ENCODE measurements at regions of chr12 and their contacts with region 1.

Region 1: DNA sequence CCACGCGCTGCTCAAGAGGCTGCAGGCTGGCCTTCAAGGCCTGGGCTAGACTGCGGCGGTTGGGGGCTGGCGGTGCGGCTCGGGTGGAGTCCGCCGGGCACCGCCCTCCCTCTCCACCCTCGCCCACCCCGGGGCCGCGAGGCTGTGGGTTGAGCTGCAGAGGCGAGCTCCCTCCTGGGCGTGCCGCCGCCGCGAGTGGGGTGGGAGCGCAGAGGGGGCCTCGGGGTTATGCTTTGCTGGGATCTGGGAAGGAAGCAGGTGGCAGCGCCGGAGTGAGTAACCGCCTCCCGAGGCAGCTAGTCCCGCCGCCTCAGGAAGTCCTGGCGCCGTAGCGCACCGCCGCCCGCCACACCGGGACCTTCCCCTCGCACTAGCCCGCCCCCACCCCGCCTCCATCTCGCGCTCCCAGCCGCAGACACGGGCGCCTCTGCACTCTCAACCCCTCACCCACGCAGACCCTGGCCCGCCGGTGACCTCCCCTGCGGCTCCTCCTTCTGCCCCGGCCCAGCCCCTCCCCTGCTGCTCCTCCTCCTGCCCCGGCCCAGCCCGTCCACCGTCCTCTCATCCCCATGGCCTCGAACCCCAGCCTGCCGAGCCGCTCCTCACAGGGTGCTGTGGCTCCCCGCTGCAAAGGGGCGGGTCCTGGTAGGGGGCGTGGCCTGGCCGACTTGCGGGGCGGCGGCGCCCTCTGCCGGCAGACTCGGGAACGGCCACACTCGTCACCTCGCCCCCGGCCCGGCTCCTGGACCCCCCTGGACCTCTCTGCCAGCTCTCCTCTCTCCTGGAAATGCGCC is 16.6 kb downstream of the TAMALIN start:
- DNase-seq: peak; percentile 95
- H3K4me3 Mint-ChIP-seq: peak overlapping the region; percentile 79
- H3K27ac Mint-ChIP-seq: peak overlapping the region; percentile 91
- H3K4me1 Mint-ChIP-seq: peaks cover 32% of the 10 kb centered on the region
- H3K27me3 Mint-ChIP-seq: no peaks in the 10 kb centered on the region

Region 2: DNA sequence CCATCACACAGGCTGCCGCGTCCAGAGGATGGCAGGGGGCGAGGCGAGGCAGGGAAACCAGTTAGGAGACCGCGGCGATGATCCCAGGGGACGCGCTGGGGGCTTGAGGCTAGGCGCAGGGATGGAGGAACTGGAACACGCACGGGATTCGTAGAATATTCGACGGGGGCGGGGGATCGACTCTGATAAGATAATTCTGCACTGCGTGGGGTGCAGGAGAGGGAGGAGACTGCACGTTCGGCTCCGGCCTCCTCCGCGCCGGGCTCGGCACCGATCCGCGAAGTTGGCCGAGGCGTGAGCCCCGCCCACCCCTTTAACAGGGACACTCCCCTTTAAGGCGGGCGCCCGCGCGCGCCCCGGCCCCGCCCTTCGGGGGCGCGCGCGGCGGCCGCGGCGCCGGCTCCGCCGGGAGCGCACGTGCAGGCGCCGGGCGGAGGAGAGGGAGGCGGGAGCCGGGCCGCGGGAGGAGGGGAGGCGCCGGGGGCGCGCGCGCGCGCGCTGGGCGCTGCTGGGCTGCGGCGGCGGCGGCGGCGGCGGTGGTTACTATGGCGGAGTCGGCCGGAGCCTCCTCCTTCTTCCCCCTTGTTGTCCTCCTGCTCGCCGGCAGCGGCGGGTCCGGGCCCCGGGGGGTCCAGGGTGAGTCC is 72.1 kb before region 1 on chr12 and contains the start of gene ACVR1B:
- CTCF ChIA-PET with region 1: interaction called, 10 read pairs
- POLR2A ChIA-PET with region 1: no interaction called
- intact Hi-C with region 1: loop called (anchors 1 kb)
- DNase-seq: peak; percentile 93
- H3K4me3 Mint-ChIP-seq: peak within 1 kb of the TSS; percentile 81
- H3K27ac Mint-ChIP-seq: peak within 1 kb of the TSS; percentile 47
- H3K4me1 Mint-ChIP-seq: peaks cover 40% of the 10 kb centered on the region
- H3K27me3 Mint-ChIP-seq: peaks cover 6% of the 10 kb centered on the region
- total RNA-seq, gene ACVR1B: 8.0 to 8.3 TPM

Region 3: GRCh38 chr12:51980051-51980808 is 43.1 kb before region 1 on chr12:
- CTCF ChIA-PET with region 1: interaction called, 23 read pairs
- POLR2A ChIA-PET with region 1: no interaction called
- intact Hi-C with region 1: no loop called
- DNase-seq: peak; percentile 79
- H3K4me3 Mint-ChIP-seq: no peak overlapping the region
- H3K27ac Mint-ChIP-seq: peak overlapping the region; percentile 57
- H3K4me1 Mint-ChIP-seq: peaks cover 34% of the 10 kb centered on the region
- H3K27me3 Mint-ChIP-seq: no peaks in the 10 kb centered on the region

Region 4: DNA sequence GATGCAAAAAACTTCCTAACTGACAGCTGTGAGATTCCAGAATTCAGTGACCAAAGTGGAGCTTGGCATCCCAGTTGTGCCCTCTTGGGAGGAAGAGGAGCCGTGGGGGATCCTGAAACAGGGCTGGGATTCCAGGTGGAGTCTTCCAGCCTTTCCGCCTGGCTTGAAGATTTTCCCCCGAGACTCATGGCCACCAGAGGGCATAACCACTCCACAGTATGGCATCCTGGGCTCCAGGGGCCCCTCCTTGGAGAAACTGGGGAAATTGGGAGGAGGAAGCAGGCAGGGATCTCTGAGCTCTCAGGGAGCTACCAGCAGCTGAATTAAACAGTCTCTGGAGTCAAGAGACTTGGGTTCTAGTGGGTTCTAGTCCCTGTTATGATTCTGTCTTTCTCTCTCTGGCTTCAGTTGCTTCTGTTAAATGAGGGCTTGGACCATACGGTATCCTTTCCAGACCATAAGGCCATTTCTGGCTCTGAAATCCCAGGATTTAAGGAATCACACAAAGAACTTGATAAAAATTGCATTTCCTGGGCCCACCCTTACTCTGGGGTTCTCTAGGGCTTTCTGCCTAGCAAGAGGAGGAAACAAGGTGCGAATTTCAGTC is 19.2 kb before region 1 on chr12:
- CTCF ChIA-PET with region 1: interaction called, 399 read pairs
- POLR2A ChIA-PET with region 1: interaction called, 28 read pairs
- intact Hi-C with region 1: loop called (anchors 1 kb)
- DNase-seq: peak; percentile 36
- H3K4me3 Mint-ChIP-seq: no peak overlapping the region
- H3K27ac Mint-ChIP-seq: no peak overlapping the region
- H3K4me1 Mint-ChIP-seq: peaks cover 17% of the 10 kb centered on the region
- H3K27me3 Mint-ChIP-seq: peaks cover 2% of the 10 kb centered on the region

Region 5: GRCh38 chr12:52050761-52051541 is 27.6 kb after region 1 on chr12 and contains the start of gene NR4A1:
- CTCF ChIA-PET with region 1: interaction called, 261 read pairs
- POLR2A ChIA-PET with region 1: interaction called, 13 read pairs
- intact Hi-C with region 1: loop called (anchors 1 kb)
- DNase-seq: peak; percentile 99
- H3K4me3 Mint-ChIP-seq: peak within 1 kb of the TSS; percentile 88
- H3K27ac Mint-ChIP-seq: peak within 1 kb of the TSS; percentile 91
- H3K4me1 Mint-ChIP-seq: peaks cover 27% of the 10 kb centered on the region
- H3K27me3 Mint-ChIP-seq: no peaks in the 10 kb centered on the region
- total RNA-seq, gene NR4A1: 64.2 to 68.2 TPM

Region 6: DNA sequence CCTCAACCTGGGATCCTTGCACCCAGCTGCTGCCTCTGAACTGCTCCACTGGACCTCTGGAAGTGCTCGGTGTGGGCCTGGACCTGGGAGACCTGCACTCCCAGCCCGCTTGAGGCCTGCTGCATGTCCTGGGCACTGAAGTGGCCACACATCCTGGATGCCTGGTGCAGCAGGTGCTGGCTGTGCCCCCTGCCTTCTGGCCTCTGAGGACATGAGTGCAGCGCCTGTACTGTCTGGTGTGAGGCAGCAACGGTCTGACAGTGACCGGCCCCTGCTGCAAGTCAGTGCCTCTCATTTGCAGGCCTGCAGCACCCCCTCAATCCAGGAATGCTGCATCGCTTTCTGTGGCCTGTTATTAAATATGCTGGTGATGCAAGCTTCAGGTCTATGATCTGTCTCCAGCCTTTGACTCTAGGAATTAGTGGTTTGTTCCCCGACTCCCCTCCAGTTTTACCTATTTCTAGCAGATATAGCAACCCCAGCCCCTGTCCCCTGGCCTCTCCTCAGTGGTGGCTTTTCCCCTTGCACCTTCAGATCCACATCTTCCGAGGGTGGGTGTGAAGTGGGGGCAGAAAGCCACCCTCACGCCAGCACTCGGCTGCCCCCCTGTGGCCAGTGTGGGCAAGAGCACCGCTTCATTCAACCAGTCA is 59.7 kb after region 1 on chr12:
- CTCF ChIA-PET with region 1: interaction called, 438 read pairs
- POLR2A ChIA-PET with region 1: interaction called, 3 read pairs
- intact Hi-C with region 1: loop called (anchors 1 kb)
- DNase-seq: peak; percentile 74
- H3K4me3 Mint-ChIP-seq: no peak overlapping the region
- H3K27ac Mint-ChIP-seq: no peak overlapping the region
- H3K4me1 Mint-ChIP-seq: peaks cover 4% of the 10 kb centered on the region
- H3K27me3 Mint-ChIP-seq: no peaks in the 10 kb centered on the region

Region 7: DNA sequence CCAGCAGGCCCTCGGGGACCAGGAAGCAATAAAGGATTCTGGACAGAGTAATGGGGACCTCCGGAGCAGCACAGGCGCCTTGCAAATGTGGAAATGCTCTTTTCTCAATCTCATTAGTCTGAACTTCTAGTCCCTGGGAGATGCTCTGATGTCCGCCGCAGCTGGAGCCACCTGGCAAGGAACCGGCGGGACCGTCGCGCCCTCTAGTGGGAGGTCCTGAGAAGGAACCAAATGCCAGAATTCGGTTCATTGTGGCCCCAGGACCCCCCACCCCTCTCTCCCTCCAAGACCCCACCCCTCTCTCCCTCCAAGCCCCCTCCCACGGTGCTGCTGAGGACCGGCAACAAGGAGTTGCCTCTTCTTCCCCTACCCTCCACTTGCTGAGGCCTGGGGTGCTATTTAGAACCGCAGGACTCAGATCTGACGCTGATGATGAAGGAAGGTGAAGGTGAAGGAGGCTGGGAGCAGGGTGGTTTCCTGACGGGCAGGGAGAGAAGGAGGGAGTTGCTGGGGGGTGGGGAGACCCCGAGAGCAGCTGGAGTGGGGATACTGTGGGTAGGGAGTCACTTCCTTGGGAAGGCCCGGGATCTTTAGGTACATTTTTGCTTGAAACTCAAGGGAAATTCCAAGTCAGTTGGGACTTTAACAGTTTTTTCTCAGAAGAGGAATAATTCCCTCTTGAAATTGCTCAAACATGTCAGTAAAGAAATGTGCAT is 98.6 kb after region 1 on chr12:
- CTCF ChIA-PET with region 1: interaction called, 114 read pairs
- POLR2A ChIA-PET with region 1: interaction called, 5 read pairs
- intact Hi-C with region 1: loop called (anchors 1 kb)
- DNase-seq: peak; percentile 77
- H3K4me3 Mint-ChIP-seq: no peak overlapping the region
- H3K27ac Mint-ChIP-seq: no peak overlapping the region
- H3K4me1 Mint-ChIP-seq: peaks cover 12% of the 10 kb centered on the region
- H3K27me3 Mint-ChIP-seq: peaks cover 4% of the 10 kb centered on the region

Region 8: DNA sequence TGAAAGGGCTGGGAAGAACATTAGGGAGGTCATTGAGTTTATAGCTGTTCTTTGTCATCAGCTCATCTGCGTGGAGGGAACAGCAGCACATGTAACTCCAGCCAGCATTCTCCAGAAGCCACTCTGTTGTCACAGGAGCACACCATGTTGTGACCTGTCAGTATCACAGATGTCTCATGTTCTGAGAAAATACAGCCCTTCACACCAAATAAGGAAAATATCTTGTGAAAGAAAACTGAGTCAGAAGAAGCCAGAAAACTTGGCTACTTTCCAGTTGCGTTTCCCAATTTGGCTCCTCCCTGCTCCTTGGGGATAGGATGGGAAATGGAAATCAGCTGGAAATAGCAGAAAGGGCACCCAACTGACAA is 393.0 kb after region 1 on chr12:
- CTCF ChIA-PET with region 1: no interaction called
- POLR2A ChIA-PET with region 1: no interaction called
- intact Hi-C with region 1: no loop called
- DNase-seq: no peak
- H3K4me3 Mint-ChIP-seq: no peak overlapping the region
- H3K27ac Mint-ChIP-seq: no peak overlapping the region
- H3K4me1 Mint-ChIP-seq: no peaks in the 10 kb centered on the region
- H3K27me3 Mint-ChIP-seq: peaks cover 6% of the 10 kb centered on the region